ENCODE measurements at regions of chr1 and their contacts with region 1.

Region 1: GRCh38 chr1:159132271-159132881 is 39.0 kb upstream of the CADM3 start:
- DNase-seq: peak; percentile 42
- ATAC-seq: peak; percentile 65
- H3K4me3 ChIP-seq: no peak overlapping the region
- H3K27ac ChIP-seq: no peak overlapping the region
- H3K4me1 ChIP-seq: no peaks in the 10 kb centered on the region
- H3K27me3 ChIP-seq: peaks cover 21% of the 10 kb centered on the region
- CTCF ChIP-seq: peak; percentile 73 to 85 (median 84)
- POLR2A ChIP-seq: no peak
- RAD21 ChIP-seq: peak; percentile 80

Region 2: GRCh38 chr1:159197561-159198557 is 65.5 kb after region 1 on chr1:
- CTCF ChIA-PET with region 1: interaction called, 14 read pairs
- POLR2A ChIA-PET with region 1: no interaction called
- RAD21 ChIA-PET with region 1: interaction called in 1 of 2 experiments, 3 read pairs
- intact Hi-C with region 1: loop called (anchors 5 kb)
- DNase-seq: peak; percentile 57
- ATAC-seq: peak; percentile 96
- H3K4me3 ChIP-seq: no peak overlapping the region
- H3K27ac ChIP-seq: no peak overlapping the region
- H3K4me1 ChIP-seq: no peaks in the 10 kb centered on the region
- H3K27me3 ChIP-seq: peaks cover 13% of the 10 kb centered on the region; the same call in 1 of the 2 replicates
- CTCF ChIP-seq: peak; percentile 83 to 95 (median 89)
- POLR2A ChIP-seq: no peak
- RAD21 ChIP-seq: peak; percentile 57